ENCODE measurements at regions of chr3 and their contacts with region 1.

Region 1: DNA sequence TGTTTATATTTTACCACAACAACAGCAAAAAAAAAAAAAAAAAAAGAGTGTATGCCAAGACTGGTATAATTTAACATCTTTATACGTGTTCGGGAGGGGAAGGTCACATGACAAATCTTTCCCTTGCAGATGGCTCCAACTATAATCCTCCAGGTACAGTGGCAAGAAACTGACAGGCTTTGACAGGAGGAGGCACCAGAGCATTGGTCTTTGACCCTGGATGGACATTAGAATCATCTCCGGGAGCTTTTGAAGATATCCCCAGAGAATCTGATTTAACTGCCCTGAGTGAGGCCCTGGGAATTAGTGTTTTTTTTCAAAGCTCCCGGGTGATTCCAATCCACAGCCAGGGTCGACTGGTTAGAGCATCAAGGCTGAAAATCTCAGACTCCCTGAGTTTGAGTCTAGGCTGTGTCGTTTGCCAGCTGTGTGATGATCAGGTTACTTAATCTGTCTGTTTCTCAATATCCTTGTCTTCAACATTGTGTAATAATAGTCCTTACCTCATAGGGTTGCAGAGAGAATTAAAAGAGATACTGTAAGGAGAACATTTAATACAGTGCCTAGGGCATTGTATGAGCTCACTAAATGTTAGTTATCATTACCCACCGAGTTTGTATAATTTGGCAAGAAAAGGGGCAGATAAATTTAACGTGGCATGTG is 8.9 kb upstream of the SEMA5B start:
- DNase-seq: no peak
- ATAC-seq: peak; percentile 66 to 77
- H3K4me3 ChIP-seq: no peak overlapping the region
- H3K27ac ChIP-seq: no peak overlapping the region
- H3K4me1 ChIP-seq: no peaks in the 10 kb centered on the region
- H3K27me3 ChIP-seq: no peaks in the 10 kb centered on the region

Region 2: DNA sequence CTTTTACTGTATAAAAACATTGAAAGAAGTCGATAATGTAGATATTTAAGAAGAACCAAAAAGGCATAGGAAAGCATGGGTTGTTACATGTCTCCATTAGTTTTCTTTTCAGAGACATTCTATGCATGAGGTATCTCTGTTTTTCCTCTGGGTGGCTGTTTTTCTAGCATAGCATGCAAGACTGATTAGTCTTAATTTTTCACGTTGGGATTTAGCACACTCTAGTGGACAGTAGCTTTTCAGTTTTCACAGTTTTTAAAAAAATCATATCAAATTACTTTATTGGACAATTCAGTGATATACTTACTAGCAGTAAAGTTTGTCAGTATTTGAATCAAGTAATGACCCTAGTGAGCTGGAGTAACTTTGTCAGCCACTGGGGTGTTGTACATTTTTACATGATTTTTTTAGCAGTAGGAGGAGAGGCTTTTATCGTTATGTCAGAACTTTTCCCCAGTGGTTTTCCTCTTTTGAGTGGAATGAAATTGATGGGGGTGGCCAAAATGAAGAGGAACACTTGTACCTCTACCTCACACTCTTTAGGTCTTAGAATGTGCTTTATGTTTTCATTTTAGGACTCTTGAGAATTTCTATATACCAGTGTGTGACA is 222.4 kb after region 1 on chr3:
- intact Hi-C with region 1: loop called in 2 of 4 experiments (anchors 10 kb)
- DNase-seq: no peak
- ATAC-seq: peak; percentile 63 to 75
- H3K4me3 ChIP-seq: no peak overlapping the region
- H3K27ac ChIP-seq: no peak overlapping the region
- H3K4me1 ChIP-seq: no peaks in the 10 kb centered on the region
- H3K27me3 ChIP-seq: no peaks in the 10 kb centered on the region

Region 3: GRCh38 chr3:123267821-123268220 is 231.3 kb after region 1 on chr3:
- intact Hi-C with region 1: loop called in 1 of 4 experiments (anchors 10 kb)
- DNase-seq: no peak
- ATAC-seq: no peak
- H3K4me3 ChIP-seq: no peak overlapping the region
- H3K27ac ChIP-seq: no peak overlapping the region
- H3K4me1 ChIP-seq: peaks cover 4% of the 10 kb centered on the region
- H3K27me3 ChIP-seq: no peaks in the 10 kb centered on the region